Prostate gland (tissue), 2 donors: ENCODE measurements at regions of chr15 and their contacts with region 1.

Region 1: DNA sequence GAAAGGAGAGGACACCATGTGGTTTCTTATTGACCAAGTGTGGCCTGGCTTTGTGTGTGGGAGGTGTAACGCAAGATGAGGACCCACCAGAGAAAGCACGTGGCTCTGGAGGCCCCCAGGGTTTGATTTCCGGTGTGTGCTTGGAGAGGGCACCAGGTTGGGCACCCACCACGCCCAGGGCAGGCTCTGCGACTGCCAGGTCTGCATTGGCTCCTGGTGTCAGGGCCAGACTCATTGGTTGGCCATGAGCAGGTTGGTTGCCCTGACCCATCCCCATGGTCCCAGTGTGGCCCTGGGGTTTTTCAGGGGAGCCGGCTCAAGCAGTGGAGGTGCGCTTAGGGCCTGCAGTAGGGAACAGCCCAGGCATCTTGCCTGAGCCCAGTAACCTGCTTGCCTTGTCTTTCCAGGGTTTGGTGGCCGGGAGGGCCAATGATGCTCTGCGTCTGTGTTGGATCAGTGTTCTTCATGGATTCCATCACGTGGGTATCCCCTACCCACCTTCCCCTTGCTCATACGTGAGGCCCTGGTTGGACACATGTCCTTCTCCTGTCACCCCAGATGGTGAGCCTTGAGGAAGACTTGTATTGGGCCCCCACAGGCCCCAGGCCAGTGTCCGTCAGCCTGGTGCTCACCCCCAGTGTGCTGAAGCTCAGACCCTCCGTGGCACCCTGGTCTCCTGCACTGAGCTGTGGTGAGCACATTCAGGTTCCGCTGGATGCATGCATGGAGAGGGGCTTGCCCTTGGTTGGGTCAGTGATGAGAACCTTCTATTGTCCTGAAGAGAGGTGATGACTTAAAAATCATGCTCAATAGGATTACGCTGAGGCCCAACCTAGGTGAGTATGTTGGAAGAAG is 193.9 kb downstream of the UBE3A start:
- DNase-seq: no peak
- H3K4me3 ChIP-seq: no peak overlapping the region
- H3K27ac ChIP-seq: no peak overlapping the region
- H3K4me1 ChIP-seq: no peaks in the 10 kb centered on the region
- H3K27me3 ChIP-seq: no peaks in the 10 kb centered on the region
- CTCF ChIP-seq: no peak
- POLR2A ChIP-seq: no peak

Region 2: DNA sequence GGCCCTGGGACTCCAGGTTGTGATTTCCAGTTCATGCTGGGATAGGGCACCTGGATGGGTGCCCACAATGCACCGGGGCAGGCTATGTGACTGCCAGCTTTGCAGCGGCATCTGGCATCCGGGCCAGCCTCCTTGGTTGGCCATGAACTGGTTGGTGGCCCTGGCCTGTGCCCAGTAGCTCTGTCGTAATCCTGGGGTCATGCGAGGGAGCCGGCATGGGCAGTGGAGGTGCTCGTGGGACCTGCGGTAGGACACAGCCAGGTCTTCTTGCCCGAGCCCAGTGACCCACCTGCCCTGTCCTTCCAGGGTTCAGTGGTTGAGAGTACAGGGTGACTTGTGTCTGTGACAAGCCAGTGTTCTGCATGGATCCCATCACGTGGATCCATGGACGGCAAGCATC is 52.3 kb before region 1 on chr15:
- intact Hi-C with region 1: loop called (anchors 5 kb)
- DNase-seq: no peak
- H3K4me3 ChIP-seq: no peak overlapping the region
- H3K27ac ChIP-seq: no peak overlapping the region
- H3K4me1 ChIP-seq: no peaks in the 10 kb centered on the region
- H3K27me3 ChIP-seq: no peaks in the 10 kb centered on the region
- CTCF ChIP-seq: no peak
- POLR2A ChIP-seq: no peak